ENCODE measurements at regions of chr2 and their contacts with region 1.

Region 1: GRCh38 chr2:135913727-135914365 is 37.6 kb upstream of the MCM6 start:
- DNase-seq: peak in 1 of 2 experiments; percentile 8
- H3K4me3 ChIP-seq: no peak overlapping the region
- H3K27ac ChIP-seq: no peak overlapping the region
- H3K4me1 ChIP-seq: no peaks in the 10 kb centered on the region
- H3K27me3 ChIP-seq: no peaks in the 10 kb centered on the region
- CTCF ChIP-seq: peak; percentile 93

Region 2: DNA sequence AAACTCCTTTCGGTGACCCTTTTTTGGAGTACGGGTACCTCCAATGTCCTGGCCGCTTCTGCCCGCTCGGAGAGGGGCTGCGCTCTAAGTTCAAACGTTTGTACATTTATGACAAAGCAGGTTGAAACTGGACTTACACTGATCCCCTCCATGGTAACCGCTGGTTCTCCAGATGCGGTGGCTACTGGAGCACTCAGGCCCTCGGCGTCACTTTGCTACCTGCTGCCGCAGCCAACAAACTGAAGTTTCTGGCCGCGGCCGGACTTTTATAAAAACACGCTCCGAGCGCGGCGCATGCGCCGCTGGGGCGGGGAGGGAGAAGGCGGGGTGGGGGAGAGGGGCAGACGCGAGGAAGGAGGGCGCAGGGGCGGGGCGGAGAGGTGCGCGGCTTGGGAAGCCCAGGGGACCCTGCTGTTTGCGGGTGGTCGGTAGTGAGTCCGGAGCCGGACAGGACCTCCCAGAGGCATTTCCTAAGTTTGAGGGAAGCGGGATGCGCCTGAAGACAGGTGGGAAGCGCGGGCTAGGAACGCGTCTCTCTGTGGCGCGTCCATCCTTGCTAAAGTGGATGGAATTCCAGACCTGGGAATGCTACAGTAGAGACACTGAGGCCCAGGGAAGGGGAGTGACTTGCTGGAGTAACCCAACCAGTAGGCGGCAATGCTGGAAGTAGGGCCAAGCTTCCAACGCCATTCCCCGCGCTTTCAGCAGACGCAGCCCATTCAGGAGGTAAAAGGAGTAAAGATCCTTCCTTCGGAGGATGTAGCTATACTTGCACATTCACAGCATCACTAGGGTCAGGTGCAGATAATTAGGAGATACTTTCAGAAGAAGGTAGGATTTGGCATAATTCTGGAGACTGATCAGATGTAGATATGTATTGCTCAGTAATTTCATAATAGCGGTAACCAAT is 204.3 kb after region 1 on chr2 and contains the start of gene CXCR4:
- CTCF ChIA-PET with region 1: no interaction called
- POLR2A ChIA-PET with region 1: no interaction called
- intact Hi-C with region 1: loop called (anchors 5 kb)
- DNase-seq: peak in 1 of 2 experiments; percentile 37
- H3K4me3 ChIP-seq: no peak within 1 kb of the TSS
- H3K27ac ChIP-seq: no peak within 1 kb of the TSS
- H3K4me1 ChIP-seq: no peaks in the 10 kb centered on the region
- H3K27me3 ChIP-seq: no peaks in the 10 kb centered on the region
- CTCF ChIP-seq: no peak
- total RNA-seq, gene CXCR4: 0.70 and 1.1 TPM in 2 replicates

Region 3: GRCh38 chr2:136378712-136379595 is 465.1 kb after region 1 on chr2:
- CTCF ChIA-PET with region 1: interaction called, 8 read pairs
- POLR2A ChIA-PET with region 1: interaction called, 5 read pairs
- intact Hi-C with region 1: loop called (anchors 1 kb)
- DNase-seq: peak in 1 of 2 experiments; percentile 36
- H3K4me3 ChIP-seq: no peak overlapping the region
- H3K27ac ChIP-seq: no peak overlapping the region
- H3K4me1 ChIP-seq: no peaks in the 10 kb centered on the region
- H3K27me3 ChIP-seq: no peaks in the 10 kb centered on the region
- CTCF ChIP-seq: peak; percentile 79

Region 4: DNA sequence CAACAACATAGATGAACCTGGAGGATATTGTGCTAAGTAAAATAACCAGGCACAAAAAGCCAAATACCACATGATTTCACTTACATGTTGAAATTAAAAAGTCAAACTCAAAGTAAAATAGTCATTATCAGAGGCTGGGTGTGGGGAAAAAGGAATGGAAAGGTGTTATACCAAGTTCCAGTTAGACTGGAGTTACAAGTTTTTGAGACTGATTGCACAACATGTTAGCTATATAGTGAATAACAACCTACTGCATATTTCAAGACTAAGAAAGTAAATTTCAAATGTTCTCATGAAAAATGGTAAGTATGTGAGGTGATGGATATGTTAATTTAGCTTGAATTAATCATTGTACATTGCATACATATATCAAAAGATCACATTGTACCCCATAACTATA is 1933.6 kb after region 1 on chr2:
- CTCF ChIA-PET with region 1: no interaction called
- POLR2A ChIA-PET with region 1: no interaction called
- intact Hi-C with region 1: loop called (anchors 10 kb)
- DNase-seq: peak in 1 of 2 experiments; percentile 79
- H3K4me3 ChIP-seq: peak overlapping the region; percentile 12; the same call in 1 of the 2 replicates
- H3K27ac ChIP-seq: peak overlapping the region; percentile 86
- H3K4me1 ChIP-seq: peaks cover 23% of the 10 kb centered on the region
- H3K27me3 ChIP-seq: no peaks in the 10 kb centered on the region
- CTCF ChIP-seq: no peak